GM12878 (cell line): ENCODE measurements at regions of chr14 and their contacts with region 1.

Region 1: DNA sequence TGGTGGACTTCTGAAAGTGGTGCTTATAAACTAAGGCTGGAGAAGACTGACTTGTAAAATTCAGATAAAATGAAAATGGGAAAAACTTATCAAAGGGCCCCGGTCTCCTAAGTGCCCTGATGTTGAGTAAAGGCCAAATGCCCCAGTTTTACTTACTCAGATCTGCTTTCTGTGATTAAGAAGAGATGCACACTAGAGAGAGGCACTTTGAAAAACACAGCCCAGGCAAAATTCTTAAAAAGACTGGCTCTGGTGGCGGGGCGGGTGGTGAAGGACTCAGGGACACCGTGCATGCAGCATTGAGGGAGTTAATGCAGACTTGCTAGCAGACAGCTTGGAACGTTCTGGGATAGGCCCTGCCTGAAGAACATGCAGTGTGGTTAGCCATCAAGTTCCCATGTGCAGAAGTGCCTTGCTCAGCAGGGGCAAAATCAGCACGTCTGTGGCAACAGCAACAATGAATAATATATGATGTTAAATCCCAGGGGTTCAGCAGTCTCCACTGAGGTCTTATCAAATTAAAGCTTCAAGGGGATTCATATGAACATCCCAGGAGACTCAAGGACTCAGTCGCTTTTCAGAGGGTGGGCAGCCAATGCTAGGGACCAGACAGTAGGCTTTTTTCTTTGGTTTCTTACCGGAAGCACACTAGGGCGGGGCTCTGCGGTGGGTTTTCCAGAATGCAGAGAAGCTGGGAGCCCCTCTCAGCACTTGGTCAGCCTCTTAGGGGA is 105.0 kb downstream of the DAD1 start:
- DNase-seq: no peak
- ATAC-seq: peak; percentile 39
- H3K4me3 ChIP-seq: peak overlapping the region; percentile 72
- H3K27ac ChIP-seq: peak overlapping the region; percentile 98
- H3K4me1 ChIP-seq: peaks cover 84% of the 10 kb centered on the region
- H3K27me3 ChIP-seq: no peaks in the 10 kb centered on the region
- CTCF ChIP-seq: no peak
- EP300 ChIP-seq: no peak
- POLR2A ChIP-seq: peak; percentile 52
- RAD21 ChIP-seq: no peak

Region 2: GRCh38 chr14:22497144-22497423 is 13.1 kb after region 1 on chr14:
- CTCF ChIA-PET with region 1: interaction called, 171 read pairs
- POLR2A ChIA-PET with region 1: interaction called, 875 read pairs
- RAD21 ChIA-PET with region 1: interaction called, 797 read pairs
- SMC1A ChIA-PET with region 1: interaction called, 288 read pairs
- in situ Hi-C with region 1: no loop called
- intact Hi-C with region 1: no loop called
- DNase-seq: no peak
- ATAC-seq: peak; percentile 18
- H3K4me3 ChIP-seq: 0 out of 2 replicates have a peak overlapping the region, but pooled peaks have one; percentile 35
- H3K27ac ChIP-seq: peak overlapping the region; percentile 65
- H3K4me1 ChIP-seq: peaks cover 62% of the 10 kb centered on the region
- H3K27me3 ChIP-seq: no peaks in the 10 kb centered on the region
- CTCF ChIP-seq: no peak
- EP300 ChIP-seq: no peak
- POLR2A ChIP-seq: no peak
- RAD21 ChIP-seq: no peak